Tibial artery (tissue), 4 donors: ENCODE measurements at regions of chr11 and their contacts with region 1.

Region 1: GRCh38 chr11:65988791-65989592 is 13.0 kb downstream of the EIF1AD start:
- DNase-seq: peak; percentile 93 to 95
- H3K4me3 ChIP-seq: no peak overlapping the region
- H3K27ac ChIP-seq: peak overlapping the region in 1 of 2 donors; percentile 46
- H3K4me1 ChIP-seq: peaks cover 0 to 17% (median 0%) of the 10 kb centered on the region in 4 donors
- H3K27me3 ChIP-seq: no peaks in the 10 kb centered on the region
- CTCF ChIP-seq: peak; percentile 90 to 99

Region 2: DNA sequence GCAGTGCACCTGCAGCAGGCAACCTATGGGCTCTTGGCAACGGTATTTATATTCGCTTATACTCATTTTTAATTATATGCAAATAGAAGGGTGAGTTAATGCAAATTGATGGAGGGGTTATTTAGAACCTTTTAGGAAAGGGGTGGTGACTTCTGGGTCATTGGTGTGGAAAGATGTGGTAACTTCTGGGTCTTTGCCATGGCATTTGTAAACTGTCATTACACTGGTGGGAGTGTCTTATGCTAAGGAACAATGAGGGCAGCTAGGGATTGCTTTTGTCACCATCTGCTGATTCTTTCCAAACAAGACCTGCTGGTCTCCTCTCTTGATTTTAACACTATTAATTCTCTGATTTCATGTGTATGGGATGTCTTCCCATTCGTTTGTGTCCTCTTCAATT is 288.6 kb before region 1 on chr11:
- intact Hi-C with region 1: loop called (anchors 10 kb)
- DNase-seq: peak in 1 of 2 donors; percentile 19
- H3K4me3 ChIP-seq: no peak overlapping the region
- H3K27ac ChIP-seq: no peak overlapping the region
- H3K4me1 ChIP-seq: no peaks in the 10 kb centered on the region
- H3K27me3 ChIP-seq: peaks cover 0 to 15% of the 10 kb centered on the region in 2 donors
- CTCF ChIP-seq: no peak

Region 3: DNA sequence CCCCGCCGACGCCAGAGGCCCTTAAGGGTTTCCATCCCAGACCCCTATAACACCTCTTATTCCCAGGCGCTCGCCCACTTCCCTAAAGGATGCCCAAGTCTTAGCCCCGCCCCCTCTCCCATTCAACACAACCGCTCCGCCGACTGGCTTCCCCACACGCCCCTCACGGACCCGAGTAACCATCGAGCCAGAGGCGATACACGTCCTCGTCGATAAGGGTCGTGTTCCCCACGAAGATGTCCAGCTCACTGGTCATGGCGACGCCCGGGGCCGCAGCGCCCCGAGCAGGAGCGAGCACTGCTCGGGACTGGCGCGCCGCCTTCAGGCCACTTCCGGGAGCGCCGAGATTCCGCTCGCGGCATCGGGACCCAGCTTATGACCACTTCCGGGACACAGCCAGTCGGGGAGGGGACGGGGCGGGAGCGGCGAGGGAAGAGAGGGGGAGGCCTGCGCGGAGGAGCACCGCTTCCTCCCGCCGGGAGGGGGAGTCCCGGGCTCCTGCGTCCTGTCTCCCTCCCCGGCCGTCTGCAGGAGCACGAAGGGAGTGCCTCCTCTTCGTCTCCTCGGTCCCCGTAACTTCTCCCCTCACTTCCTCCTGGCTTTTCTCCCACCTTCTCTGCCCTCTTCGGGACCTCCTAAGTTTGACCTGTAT is 100.7 kb before region 1 on chr11 and contains the start of gene FIBP:
- intact Hi-C with region 1: loop called (anchors 2 kb)
- DNase-seq: peak; percentile 97 to 99
- H3K4me3 ChIP-seq: peak within 1 kb of the TSS; percentile 61 to 83
- H3K27ac ChIP-seq: peak within 1 kb of the TSS; percentile 93 to 95
- H3K4me1 ChIP-seq: peaks cover 6 to 73% (median 53%) of the 10 kb centered on the region in 4 donors
- H3K27me3 ChIP-seq: no peaks in the 10 kb centered on the region
- CTCF ChIP-seq: peak; percentile 87 to 96

Region 4: DNA sequence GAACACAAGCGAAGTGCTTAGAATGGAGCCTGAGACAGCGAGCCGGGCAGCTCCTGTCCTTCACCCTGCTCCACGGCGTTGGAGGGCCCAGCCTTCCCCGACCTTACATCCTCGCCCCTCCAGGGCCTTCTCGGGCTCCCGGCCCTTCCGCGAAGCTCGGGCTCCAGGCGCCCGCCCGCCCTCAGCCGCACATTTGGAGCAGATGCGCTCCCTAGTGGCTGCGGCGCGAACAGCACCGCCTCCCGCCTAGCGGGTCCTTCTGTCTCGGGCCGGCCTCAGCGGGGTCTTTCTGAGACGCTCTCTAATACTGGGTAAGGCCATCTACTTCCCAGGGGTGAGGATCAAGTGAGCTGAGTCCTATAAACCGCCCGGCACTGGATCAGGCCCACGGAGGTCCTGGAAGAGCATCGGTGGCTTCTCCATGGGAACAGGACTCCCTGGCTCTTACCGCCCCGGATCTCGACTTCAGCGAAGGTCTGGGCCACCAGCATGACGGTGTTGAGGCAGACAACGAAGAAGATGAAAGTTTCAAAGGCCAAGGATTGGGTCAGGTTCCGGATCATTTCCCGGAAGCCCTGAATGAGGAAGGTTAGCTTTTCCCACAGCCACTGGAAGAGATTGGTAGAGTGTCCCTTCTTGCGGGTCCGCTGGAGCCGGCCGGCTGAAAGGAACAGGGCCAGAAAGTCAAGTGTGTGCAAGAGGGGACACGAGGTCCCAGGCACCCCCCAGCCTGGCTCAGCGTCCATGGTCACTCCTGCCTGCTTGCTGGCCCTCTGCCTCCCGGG is 33.6 kb after region 1 on chr11:
- intact Hi-C with region 1: loop called (anchors 5 kb)
- DNase-seq: peak; percentile 62 to 85
- H3K4me3 ChIP-seq: peak overlapping the region; percentile 12 to 30
- H3K27ac ChIP-seq: peak overlapping the region in 1 of 2 donors; percentile 34
- H3K4me1 ChIP-seq: peaks cover 0 to 27% (median 23%) of the 10 kb centered on the region in 4 donors
- H3K27me3 ChIP-seq: no peaks in the 10 kb centered on the region
- CTCF ChIP-seq: peak; percentile 97 to 99